ENCODE measurements at regions of chr19 and their contacts with region 1.

Region 1: DNA sequence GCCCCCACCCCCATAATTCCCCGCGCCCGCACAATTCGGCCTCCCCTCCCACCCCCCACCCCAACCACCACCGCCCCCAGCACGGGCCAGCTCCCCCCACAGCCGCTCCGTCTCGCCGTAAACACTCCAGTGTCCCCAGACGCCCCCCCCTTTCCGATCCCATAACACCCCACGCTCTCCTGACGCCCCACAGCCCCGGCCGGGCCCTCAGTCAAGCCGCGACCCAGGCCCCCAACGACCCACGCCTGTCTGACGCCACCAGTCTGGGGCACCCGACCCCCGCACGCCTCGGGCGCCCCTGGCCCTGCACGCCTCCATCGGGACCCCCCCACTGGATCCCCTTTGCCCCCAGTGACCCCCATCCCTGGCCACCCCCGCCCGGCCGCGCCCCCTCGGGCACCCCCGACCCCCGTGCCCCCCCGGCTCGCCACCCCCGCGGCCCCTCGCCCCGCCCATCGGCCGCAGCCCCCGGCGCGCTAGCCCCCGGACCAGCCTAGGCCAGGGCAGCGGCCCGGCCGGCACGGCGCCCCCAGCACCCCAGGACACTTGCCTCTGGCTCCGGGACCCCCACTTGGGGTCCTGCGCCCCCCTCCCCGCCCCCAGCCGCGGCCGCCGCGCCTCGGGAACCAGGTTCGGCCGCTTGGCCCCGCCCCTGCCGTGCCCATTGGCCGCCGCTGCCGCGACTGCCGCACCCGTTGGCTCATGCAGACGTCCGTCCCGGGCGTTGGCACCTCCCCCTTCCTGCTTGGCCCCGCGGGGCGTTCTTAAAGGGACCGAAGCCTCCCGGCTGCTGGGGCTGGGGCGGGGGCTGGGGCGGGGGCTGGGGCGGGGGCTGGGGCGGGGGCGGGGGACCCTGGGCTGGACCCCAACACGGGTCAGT is at the start of gene FKBP8:
- DNase-seq: peak; percentile 65
- ATAC-seq: peak; percentile 95
- H3K4me3 ChIP-seq: peak within 1 kb of the TSS; percentile 76
- H3K27ac ChIP-seq: peak within 1 kb of the TSS; percentile 80
- H3K4me1 ChIP-seq: peaks cover 8 to 18% of the 10 kb centered on the region in 2 experiments
- H3K27me3 ChIP-seq: no peaks in the 10 kb centered on the region
- CTCF ChIP-seq: no peak
- POLR2A ChIP-seq: no peak
- RAD21 ChIP-seq: no peak
- total RNA-seq, gene FKBP8: 261 TPM

Region 2: GRCh38 chr19:18557474-18558201 is 14.5 kb after region 1 on chr19 and contains the start of gene KXD1:
- CTCF ChIA-PET with region 1: no interaction called
- POLR2A ChIA-PET with region 1: interaction called, 10 read pairs
- RAD21 ChIA-PET with region 1: no interaction called
- intact Hi-C with region 1: no loop called
- DNase-seq: peak; percentile 99
- ATAC-seq: peak; percentile 97
- H3K4me3 ChIP-seq: peak within 1 kb of the TSS; percentile 89 to 100
- H3K27ac ChIP-seq: peak within 1 kb of the TSS; percentile 79
- H3K4me1 ChIP-seq: peaks cover 4 to 22% of the 10 kb centered on the region in 2 experiments; a peak in 3 of 4 replicates
- H3K27me3 ChIP-seq: no peaks in the 10 kb centered on the region
- CTCF ChIP-seq: no peak
- POLR2A ChIP-seq: peak; percentile 55
- RAD21 ChIP-seq: no peak
- total RNA-seq, gene KXD1: 139 TPM

Measured in HCT116 (cell line).